Adrenal gland (tissue), 19 donors: ENCODE measurements at regions of chr3 and their contacts with region 1.

Region 1: DNA sequence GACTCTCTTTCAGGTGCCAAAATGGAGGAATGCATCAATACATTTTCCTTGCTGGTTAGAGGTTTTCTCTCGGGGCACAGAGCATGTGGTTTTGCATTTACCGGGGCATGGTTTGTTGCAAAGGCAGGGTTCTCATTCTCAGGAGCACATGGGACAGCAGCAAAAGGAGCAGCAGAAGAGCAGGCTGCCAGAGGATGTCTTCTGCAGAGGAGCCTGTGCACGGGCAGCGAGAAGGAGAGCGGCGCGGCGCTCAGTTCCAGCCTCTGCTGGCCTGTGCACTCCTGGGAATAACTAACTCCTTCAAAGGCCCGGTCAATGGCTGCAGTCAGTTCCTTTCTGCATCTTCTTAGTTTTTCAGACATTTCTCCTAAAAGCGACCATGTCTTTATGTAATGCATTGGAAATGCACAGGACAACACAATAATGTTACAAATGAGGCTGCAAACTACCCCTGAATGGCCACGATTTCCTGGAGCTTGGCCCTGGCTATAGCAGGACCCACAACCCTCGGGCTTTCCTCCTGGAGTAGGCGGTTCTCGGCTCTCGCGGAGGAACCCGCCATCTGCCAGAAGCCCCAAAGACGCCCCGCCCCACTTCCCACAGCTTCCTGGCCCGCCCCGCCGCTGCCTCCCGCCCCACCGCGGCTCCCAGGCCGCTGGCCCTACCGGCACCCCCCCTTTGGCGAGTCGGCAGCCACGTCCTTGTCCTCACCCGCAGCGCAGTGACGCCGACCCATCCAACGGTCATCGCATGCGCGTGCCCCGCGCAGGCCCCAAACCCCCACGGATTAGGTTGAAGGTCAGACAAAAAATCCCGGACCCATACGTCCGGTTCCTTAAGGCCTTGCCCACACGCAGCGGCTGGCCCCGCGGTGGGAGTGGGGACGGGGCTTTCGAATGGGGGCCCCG is at the start of gene C3orf62:
- DNase-seq: peak; percentile 93 to 97 (median 95)
- H3K4me3 ChIP-seq: peak within 1 kb of the TSS in 1 of 4 donors; percentile 41
- H3K27ac ChIP-seq: peak within 1 kb of the TSS; percentile 89 to 99 (median 97)
- H3K4me1 ChIP-seq: peaks cover 25 to 45% of the 10 kb centered on the region in 2 donors
- H3K27me3 ChIP-seq: no peaks in the 10 kb centered on the region
- CTCF ChIP-seq: no peak
- POLR2A ChIP-seq: peak; percentile 13 to 63
- total RNA-seq, gene C3orf62: 3.4 to 7.4 (median 5.3) TPM

Region 2: GRCh38 chr3:48960841-48961413 is 315.8 kb before region 1 on chr3:
- intact Hi-C with region 1: no loop called
- DNase-seq: no peak
- H3K4me3 ChIP-seq: no peak overlapping the region
- H3K27ac ChIP-seq: no peak overlapping the region
- H3K4me1 ChIP-seq: peaks cover 0 to under 1% of the 10 kb centered on the region in 2 donors
- H3K27me3 ChIP-seq: no peaks in the 10 kb centered on the region
- CTCF ChIP-seq: no peak
- POLR2A ChIP-seq: no peak

Region 3: DNA sequence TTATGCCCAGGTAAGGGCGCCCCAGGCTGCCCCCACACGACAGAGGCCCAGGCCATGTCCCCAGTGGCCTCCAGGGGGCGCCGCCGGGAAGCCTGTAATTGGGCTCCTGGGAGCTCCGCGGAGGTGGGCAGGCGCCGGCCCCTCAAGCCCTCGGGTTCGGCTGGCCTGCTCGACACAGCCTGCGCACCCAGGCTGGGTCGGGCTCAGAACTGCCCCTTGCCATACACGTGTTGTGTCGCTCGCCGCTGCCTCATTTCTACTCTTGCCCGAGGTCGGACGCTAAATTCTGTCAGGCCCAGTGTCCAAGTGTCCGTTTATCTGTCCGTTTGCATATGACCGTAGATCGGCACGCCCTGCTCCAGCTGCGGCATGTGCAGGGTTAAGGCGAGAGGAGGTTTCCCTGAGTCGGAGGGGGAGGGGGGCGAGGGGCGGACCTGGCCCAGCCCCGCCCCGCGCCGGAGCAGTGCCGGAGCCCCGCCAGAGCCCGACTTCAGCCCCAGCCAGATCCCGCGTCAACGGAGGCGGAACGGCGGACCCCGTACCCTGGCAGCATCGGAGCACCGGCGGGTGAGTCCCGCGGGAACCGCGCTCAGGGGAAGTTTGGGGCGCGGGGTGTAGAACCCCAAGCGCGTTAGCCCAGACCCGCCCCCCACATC is 105.5 kb before region 1 on chr3 and contains the start of gene KLHDC8B:
- intact Hi-C with region 1: loop called (anchors 5 kb)
- DNase-seq: peak; percentile 91 to 97 (median 95)
- H3K4me3 ChIP-seq: peak within 1 kb of the TSS; percentile 54 to 87 (median 61)
- H3K27ac ChIP-seq: peak within 1 kb of the TSS; percentile 49 to 93 (median 89)
- H3K4me1 ChIP-seq: peaks cover 44 to 54% of the 10 kb centered on the region in 2 donors
- H3K27me3 ChIP-seq: no peaks in the 10 kb centered on the region
- CTCF ChIP-seq: peak; percentile 84 to 96 (median 94)
- POLR2A ChIP-seq: peak; percentile 73 to 93
- total RNA-seq, gene KLHDC8B: 195 to 501 (median 247) TPM